ENCODE measurements at regions of chr5 and their contacts with region 1.

Region 1: DNA sequence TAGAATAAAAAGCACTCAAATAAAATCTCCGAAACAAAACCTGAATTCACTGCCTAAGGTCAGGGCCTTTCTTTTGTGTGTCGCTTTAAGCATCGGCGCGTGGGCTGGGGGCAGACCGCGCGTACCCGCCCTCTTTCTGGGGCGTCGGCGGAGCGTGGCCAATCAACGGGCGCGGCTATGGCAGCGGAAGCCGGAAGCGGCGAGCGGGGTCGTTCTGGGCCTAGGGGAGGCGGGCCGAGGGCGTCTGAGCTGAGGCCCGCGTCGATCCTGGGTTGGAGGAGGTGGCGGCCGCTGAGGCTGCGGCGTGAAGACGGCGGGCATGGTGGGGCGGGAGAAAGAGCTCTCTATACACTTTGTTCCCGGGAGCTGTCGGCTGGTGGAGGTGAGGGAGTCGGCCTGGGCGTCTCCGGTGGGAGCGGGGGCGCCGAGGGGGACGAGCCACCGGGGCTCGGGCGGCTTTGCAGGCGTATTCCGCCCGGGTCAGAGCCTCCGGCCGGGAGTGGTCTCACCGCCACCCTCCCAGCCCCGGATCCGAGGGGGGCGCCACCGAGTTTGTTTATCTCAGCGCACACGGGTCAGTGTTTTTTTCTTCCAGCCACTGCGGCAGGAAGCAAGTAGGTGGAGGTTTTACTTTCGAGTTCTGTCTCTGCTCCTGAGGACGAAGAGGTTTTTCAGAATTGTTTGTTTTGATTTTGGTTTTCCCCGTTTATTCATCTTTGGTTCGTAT is at the start of gene MAT2B:
- DNase-seq: peak; percentile 90 to 98 (median 96)
- ATAC-seq: peak; percentile 85
- H3K4me3 ChIP-seq: peak within 1 kb of the TSS; percentile 78
- H3K4me3 Mint-ChIP-seq: peak within 1 kb of the TSS; percentile 98
- H3K27ac ChIP-seq: peak within 1 kb of the TSS; percentile 92 to 93
- H3K27ac Mint-ChIP-seq: peak within 1 kb of the TSS; percentile 99
- H3K4me1 ChIP-seq: peaks cover 23% of the 10 kb centered on the region
- H3K4me1 Mint-ChIP-seq: peaks cover 57% of the 10 kb centered on the region
- H3K27me3 ChIP-seq: no peaks in the 10 kb centered on the region
- H3K27me3 Mint-ChIP-seq: no peaks in the 10 kb centered on the region
- CTCF ChIP-seq: peak; percentile 61
- total RNA-seq, gene MAT2B: 33.0 to 34.7 TPM

Region 2: DNA sequence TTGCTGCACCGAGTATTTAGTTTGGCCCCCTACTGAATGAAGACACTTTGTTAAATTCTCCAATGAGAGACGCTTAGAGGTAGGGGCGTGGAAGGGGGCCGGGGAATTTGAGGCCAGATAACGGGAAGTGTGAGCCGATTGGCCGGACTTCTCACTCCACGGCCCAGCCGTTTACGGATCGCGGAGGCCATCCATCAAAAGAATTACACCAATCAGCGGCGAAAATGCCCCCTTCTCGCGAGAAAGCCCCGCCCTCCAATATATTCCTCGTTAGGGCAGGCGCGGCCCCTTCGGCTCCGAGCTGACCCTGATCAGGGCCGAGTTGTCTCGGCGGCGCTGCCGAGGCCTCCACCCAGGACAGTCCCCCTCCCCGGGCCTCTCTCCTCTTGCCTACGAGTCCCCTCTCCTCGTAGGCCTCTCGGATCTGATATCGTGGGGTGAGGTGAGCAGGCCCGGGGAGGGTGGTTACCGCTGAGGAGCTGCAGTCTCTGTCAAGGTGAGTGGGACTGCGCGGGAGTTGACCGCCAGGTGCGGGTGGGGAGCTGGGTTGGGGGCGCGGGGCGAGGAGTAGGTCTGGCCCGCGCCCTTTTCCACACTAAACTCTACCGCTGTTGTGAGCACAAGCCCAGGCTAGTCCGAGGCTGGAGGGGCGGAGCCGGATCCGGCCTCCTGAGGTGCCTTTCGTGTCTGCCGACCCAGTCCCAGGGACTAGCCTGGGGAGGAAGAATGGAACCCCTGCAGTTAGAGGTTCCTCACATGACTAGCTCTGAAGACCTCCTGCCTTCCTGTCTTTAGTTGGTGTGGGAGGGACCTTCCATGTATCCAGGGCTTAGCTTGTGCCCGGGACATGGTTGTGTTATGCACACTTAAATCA is 68.0 kb before region 1 on chr5 and contains the start of gene CCNG1:
- CTCF ChIA-PET with region 1: interaction called, 4 read pairs
- POLR2A ChIA-PET with region 1: interaction called, 26 read pairs
- intact Hi-C with region 1: loop called (anchors 1 kb)
- DNase-seq: peak; percentile 72 to 95 (median 80)
- ATAC-seq: peak; percentile 90
- H3K4me3 ChIP-seq: peak within 1 kb of the TSS; percentile 75
- H3K4me3 Mint-ChIP-seq: peak within 1 kb of the TSS; percentile 98
- H3K27ac ChIP-seq: peak within 1 kb of the TSS; percentile 76 to 87
- H3K27ac Mint-ChIP-seq: peak within 1 kb of the TSS; percentile 98
- H3K4me1 ChIP-seq: peaks cover 21% of the 10 kb centered on the region
- H3K4me1 Mint-ChIP-seq: peaks cover 47% of the 10 kb centered on the region
- H3K27me3 ChIP-seq: no peaks in the 10 kb centered on the region
- H3K27me3 Mint-ChIP-seq: no peaks in the 10 kb centered on the region
- CTCF ChIP-seq: no peak
- total RNA-seq, gene CCNG1: 114 to 116 TPM

Region 3: GRCh38 chr5:163459922-163460766 is 45.4 kb before region 1 on chr5 and contains the starts of genes HMMR and NUDCD2:
- CTCF ChIA-PET with region 1: interaction called, 8 read pairs
- POLR2A ChIA-PET with region 1: interaction called, 343 read pairs
- intact Hi-C with region 1: loop called (anchors 1 to 2 kb)
- DNase-seq: peak; percentile 88 to 98 (median 94)
- ATAC-seq: peak; percentile 82
- H3K4me3 ChIP-seq: peak within 1 kb of the TSS; percentile 74
- H3K4me3 Mint-ChIP-seq: peak within 1 kb of the TSS; percentile 95
- H3K27ac ChIP-seq: peak within 1 kb of the TSS; percentile 93 to 97
- H3K27ac Mint-ChIP-seq: peak within 1 kb of the TSS; percentile 99
- H3K4me1 ChIP-seq: peaks cover 23% of the 10 kb centered on the region
- H3K4me1 Mint-ChIP-seq: peaks cover 57% of the 10 kb centered on the region
- H3K27me3 ChIP-seq: no peaks in the 10 kb centered on the region
- H3K27me3 Mint-ChIP-seq: no peaks in the 10 kb centered on the region
- CTCF ChIP-seq: peak; percentile 35
- total RNA-seq, gene HMMR: 0.42 to 0.74 TPM
- total RNA-seq, gene NUDCD2: 18.0 to 18.9 TPM

Region 4: DNA sequence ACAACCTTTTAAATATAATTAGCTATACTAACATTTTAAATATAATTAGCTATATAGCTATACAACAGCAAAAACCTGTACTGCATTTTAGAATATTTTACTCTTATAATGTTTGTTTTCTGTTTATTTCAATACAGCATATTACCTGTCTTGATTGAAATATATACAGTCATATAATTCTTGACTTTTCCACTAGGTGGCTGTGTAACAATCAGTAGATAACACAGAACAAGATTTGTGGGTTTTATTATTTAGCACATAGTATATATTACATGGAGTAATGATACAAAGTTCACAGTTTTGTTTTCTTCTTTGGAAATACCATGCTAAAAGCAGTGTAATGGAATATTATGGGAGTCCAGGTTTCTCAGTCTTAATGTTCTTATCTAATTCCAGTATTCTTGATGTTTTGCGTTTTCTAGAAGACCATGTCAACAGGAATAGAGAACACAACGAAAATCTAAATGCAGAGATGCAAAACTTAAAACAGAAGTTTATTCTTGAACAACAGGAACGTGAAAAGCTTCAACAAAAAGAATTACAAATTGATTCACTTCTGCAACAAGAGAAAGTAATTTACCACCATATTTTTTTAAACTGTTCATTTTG is 31.8 kb before region 1 on chr5:
- CTCF ChIA-PET with region 1: no interaction called
- POLR2A ChIA-PET with region 1: interaction called, 8 read pairs
- intact Hi-C with region 1: loop called in 1 of 2 experiments (anchors 1 kb)
- DNase-seq: peak in 3 of 14 experiments; percentile 44 to 55 (median 55)
- ATAC-seq: peak; percentile 55
- H3K4me3 ChIP-seq: no peak overlapping the region
- H3K4me3 Mint-ChIP-seq: no peak overlapping the region
- H3K27ac ChIP-seq: no peak overlapping the region
- H3K27ac Mint-ChIP-seq: no peak overlapping the region
- H3K4me1 ChIP-seq: no peaks in the 10 kb centered on the region
- H3K4me1 Mint-ChIP-seq: no peaks in the 10 kb centered on the region
- H3K27me3 ChIP-seq: no peaks in the 10 kb centered on the region
- H3K27me3 Mint-ChIP-seq: no peaks in the 10 kb centered on the region
- CTCF ChIP-seq: peak; percentile 58

Region 5: GRCh38 chr5:163478982-163479271 is 26.6 kb before region 1 on chr5:
- CTCF ChIA-PET with region 1: no interaction called
- POLR2A ChIA-PET with region 1: interaction called, 24 read pairs
- intact Hi-C with region 1: no loop called
- DNase-seq: no peak
- ATAC-seq: no peak
- H3K4me3 ChIP-seq: no peak overlapping the region
- H3K4me3 Mint-ChIP-seq: no peak overlapping the region
- H3K27ac ChIP-seq: no peak overlapping the region
- H3K27ac Mint-ChIP-seq: no peak overlapping the region
- H3K4me1 ChIP-seq: no peaks in the 10 kb centered on the region
- H3K4me1 Mint-ChIP-seq: no peaks in the 10 kb centered on the region
- H3K27me3 ChIP-seq: no peaks in the 10 kb centered on the region
- H3K27me3 Mint-ChIP-seq: no peaks in the 10 kb centered on the region
- CTCF ChIP-seq: no peak

Region 6: GRCh38 chr5:163489055-163489744 is 16.3 kb before region 1 on chr5:
- CTCF ChIA-PET with region 1: interaction called, 5 read pairs
- POLR2A ChIA-PET with region 1: interaction called, 24 read pairs
- intact Hi-C with region 1: no loop called
- DNase-seq: peak in 6 of 14 experiments; percentile 7 to 46 (median 30)
- ATAC-seq: no peak
- H3K4me3 ChIP-seq: no peak overlapping the region
- H3K4me3 Mint-ChIP-seq: no peak overlapping the region
- H3K27ac ChIP-seq: no peak overlapping the region
- H3K27ac Mint-ChIP-seq: no peak overlapping the region
- H3K4me1 ChIP-seq: peaks cover 5% of the 10 kb centered on the region
- H3K4me1 Mint-ChIP-seq: no peaks in the 10 kb centered on the region
- H3K27me3 ChIP-seq: no peaks in the 10 kb centered on the region
- H3K27me3 Mint-ChIP-seq: no peaks in the 10 kb centered on the region
- CTCF ChIP-seq: peak; percentile 13

Region 7: GRCh38 chr5:163540696-163541095 is 35.2 kb after region 1 on chr5:
- CTCF ChIA-PET with region 1: no interaction called
- POLR2A ChIA-PET with region 1: no interaction called
- intact Hi-C with region 1: no loop called
- DNase-seq: no peak
- ATAC-seq: no peak
- H3K4me3 ChIP-seq: no peak overlapping the region
- H3K4me3 Mint-ChIP-seq: no peak overlapping the region
- H3K27ac ChIP-seq: no peak overlapping the region
- H3K27ac Mint-ChIP-seq: no peak overlapping the region
- H3K4me1 ChIP-seq: no peaks in the 10 kb centered on the region
- H3K4me1 Mint-ChIP-seq: no peaks in the 10 kb centered on the region
- H3K27me3 ChIP-seq: no peaks in the 10 kb centered on the region
- H3K27me3 Mint-ChIP-seq: peaks cover 50% of the 10 kb centered on the region
- CTCF ChIP-seq: no peak

Region 8: GRCh38 chr5:164532235-164532900 is 1026.8 kb after region 1 on chr5:
- CTCF ChIA-PET with region 1: no interaction called
- POLR2A ChIA-PET with region 1: no interaction called
- intact Hi-C with region 1: no loop called
- DNase-seq: no peak
- ATAC-seq: no peak
- H3K4me3 ChIP-seq: no peak overlapping the region
- H3K4me3 Mint-ChIP-seq: no peak overlapping the region
- H3K27ac ChIP-seq: no peak overlapping the region
- H3K27ac Mint-ChIP-seq: no peak overlapping the region
- H3K4me1 ChIP-seq: no peaks in the 10 kb centered on the region
- H3K4me1 Mint-ChIP-seq: no peaks in the 10 kb centered on the region
- H3K27me3 ChIP-seq: no peaks in the 10 kb centered on the region
- H3K27me3 Mint-ChIP-seq: no peaks in the 10 kb centered on the region
- CTCF ChIP-seq: no peak

Measured in CD4-positive, alpha-beta T cell (primary cell).